AG04450 (cell line): ENCODE measurements at regions of chr12 and their contacts with region 1.

Region 1: GRCh38 chr12:98418357-98419075 is 96.9 kb upstream of the TMPO start:
- DNase-seq: peak; percentile 83
- H3K4me3 ChIP-seq: peak overlapping the region; percentile 50
- H3K27ac ChIP-seq: peak overlapping the region; percentile 80
- H3K27me3 ChIP-seq: no peaks in the 10 kb centered on the region
- CTCF ChIP-seq: no peak

Region 2: GRCh38 chr12:98397316-98398105 is 21.0 kb before region 1 on chr12:
- CTCF ChIA-PET with region 1: interaction called, 29 read pairs
- POLR2A ChIA-PET with region 1: no interaction called
- DNase-seq: peak; percentile 30
- H3K4me3 ChIP-seq: peak overlapping the region; percentile 55
- H3K27ac ChIP-seq: no peak overlapping the region
- H3K27me3 ChIP-seq: peaks cover under 1% of the 10 kb centered on the region
- CTCF ChIP-seq: peak; percentile 86

Region 3: GRCh38 chr12:98653866-98654493 is 235.5 kb after region 1 on chr12:
- CTCF ChIA-PET with region 1: interaction called, 12 read pairs
- POLR2A ChIA-PET with region 1: no interaction called
- DNase-seq: peak; percentile 34
- H3K4me3 ChIP-seq: no peak overlapping the region
- H3K27ac ChIP-seq: no peak overlapping the region
- H3K27me3 ChIP-seq: no peaks in the 10 kb centered on the region
- CTCF ChIP-seq: peak; percentile 72